CD14-positive monocyte (primary cell): ENCODE measurements at regions of chr6 and their contacts with region 1.

Region 1: DNA sequence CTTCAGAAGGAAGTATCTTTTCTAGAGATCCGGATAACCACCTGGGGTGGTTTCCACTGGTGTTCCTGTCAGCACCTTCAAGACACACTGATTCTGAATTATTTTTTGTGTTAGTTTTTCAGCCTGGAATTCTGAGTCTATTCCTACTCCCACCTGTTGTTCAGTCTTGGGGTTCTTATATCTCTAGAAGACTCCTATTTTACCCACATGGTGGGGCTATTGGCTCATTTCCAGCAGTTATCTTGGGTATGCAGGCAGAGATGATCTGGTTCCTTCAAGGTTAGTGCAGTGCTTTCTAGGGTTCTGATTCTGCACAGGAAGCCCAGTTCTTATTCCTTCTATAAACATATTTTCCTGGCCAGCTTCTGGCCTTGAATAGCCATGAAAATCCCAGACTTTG is 175.6 kb upstream of the PDE7B start:
- DNase-seq: peak; percentile 14 to 40 (median 38)
- H3K4me3 ChIP-seq: no peak overlapping the region
- H3K4me3 Mint-ChIP-seq: no peak overlapping the region
- H3K27ac ChIP-seq: no peak overlapping the region
- H3K27ac Mint-ChIP-seq: no peak overlapping the region
- H3K4me1 ChIP-seq: no peaks in the 10 kb centered on the region
- H3K4me1 Mint-ChIP-seq: no peaks in the 10 kb centered on the region
- H3K27me3 ChIP-seq: no peaks in the 10 kb centered on the region
- H3K27me3 Mint-ChIP-seq: peaks cover 0 to 3% (median 2%) of the 10 kb centered on the region in 3 donors
- CTCF ChIP-seq: peak; percentile 49

Region 2: GRCh38 chr6:135909737-135910387 is 234.0 kb after region 1 on chr6:
- intact Hi-C with region 1: loop called in 1 of 2 experiments (anchors 5 kb)
- DNase-seq: peak; percentile 26 to 45 (median 42)
- H3K4me3 ChIP-seq: no peak overlapping the region
- H3K4me3 Mint-ChIP-seq: no peak overlapping the region
- H3K27ac ChIP-seq: no peak overlapping the region
- H3K27ac Mint-ChIP-seq: no peak overlapping the region
- H3K4me1 ChIP-seq: no peaks in the 10 kb centered on the region
- H3K4me1 Mint-ChIP-seq: no peaks in the 10 kb centered on the region
- H3K27me3 ChIP-seq: no peaks in the 10 kb centered on the region
- H3K27me3 Mint-ChIP-seq: no peaks in the 10 kb centered on the region
- CTCF ChIP-seq: peak; percentile 71